Activated B cell treated with CpG ODN at 0.5 μM for 24 hours (primary cell): ENCODE measurements at regions of chr7 and their contacts with region 1.

Region 1: DNA sequence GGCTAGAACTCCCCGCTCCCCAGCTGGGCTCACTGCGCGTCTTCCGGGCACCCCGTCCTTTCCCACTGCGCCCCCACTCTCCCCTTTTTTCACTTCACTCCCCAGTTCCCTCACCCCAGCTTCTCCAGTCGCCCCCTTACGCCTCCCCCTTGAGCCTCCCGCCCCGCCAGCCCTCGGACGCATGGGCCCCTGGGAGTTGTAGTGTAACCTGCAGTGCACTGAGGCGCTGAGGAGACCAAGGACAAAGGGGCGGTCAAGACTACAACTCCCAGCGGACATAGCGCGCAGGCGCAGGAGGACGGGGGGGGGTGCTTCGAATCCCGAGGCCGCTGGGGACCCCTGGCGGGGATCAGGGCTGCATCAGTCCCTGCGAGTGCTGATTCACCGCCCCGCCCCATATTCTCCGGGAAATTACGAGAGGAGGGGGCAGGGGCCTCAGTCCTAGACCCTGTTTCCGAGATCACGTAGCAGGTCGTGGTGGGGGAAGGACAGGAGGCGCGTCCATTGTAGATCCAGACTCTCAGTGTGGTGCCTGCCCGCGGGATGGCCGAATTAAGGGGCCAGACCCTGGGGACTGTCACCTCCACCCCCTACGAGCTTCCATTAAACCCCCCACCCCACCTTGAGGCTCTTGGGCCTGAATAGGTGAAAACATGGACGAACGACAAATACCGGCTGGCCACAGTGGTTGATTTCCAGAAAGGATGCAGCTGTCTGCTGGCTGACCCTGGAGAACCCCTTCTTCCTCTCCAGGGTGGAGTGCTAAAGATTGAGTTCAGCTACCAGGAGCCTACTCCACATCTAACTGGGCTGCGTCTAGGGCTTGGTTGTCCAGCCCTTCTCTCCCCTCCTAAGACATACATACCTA is 554 bp upstream of the YWHAG start:
- DNase-seq: peak; percentile 90
- ATAC-seq: peak; percentile 90
- H3K4me3 Mint-ChIP-seq: peak overlapping the region; percentile 92
- H3K27ac Mint-ChIP-seq: peak overlapping the region; percentile 98
- H3K4me1 Mint-ChIP-seq: peaks cover 39% of the 10 kb centered on the region
- H3K27me3 Mint-ChIP-seq: no peaks in the 10 kb centered on the region
- CTCF ChIP-seq: no peak

Region 2: DNA sequence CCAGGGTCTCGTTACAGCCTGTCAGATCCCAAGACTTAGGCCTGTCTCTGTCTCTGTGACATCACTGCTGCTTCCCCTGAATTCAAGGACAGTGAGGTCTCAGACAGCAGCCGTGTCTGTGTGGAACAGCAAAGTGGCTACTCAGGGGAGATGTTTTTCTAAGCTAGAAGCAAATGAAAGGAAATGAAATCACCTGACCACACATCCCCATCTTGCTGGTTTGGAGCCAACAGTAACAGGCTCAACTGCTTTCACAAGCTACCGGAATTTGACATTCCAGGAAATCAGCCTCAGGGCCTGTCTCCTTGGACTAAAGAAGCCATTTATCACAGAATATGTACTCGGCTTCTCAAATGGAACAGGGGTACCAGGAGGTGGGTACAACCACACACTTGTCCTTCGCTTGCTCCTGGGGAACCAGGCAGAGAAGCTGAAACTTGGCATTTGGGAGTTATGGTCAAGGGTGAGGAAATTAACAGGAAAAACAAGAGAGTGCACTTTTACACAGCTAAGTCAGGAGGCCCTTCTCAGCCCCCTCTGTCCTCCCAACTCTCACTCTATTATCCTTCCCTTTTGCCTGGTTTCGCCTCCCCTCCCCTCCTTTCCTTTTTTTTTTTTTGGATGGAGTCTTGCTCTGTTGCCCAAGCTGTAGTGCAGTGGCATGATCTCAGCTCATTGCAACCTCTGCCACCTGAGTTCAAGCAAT is 794.1 kb before region 1 on chr7:
- CTCF ChIA-PET with region 1: no interaction called
- POLR2A ChIA-PET with region 1: no interaction called
- intact Hi-C with region 1: no loop called
- DNase-seq: no peak
- ATAC-seq: no peak
- H3K4me3 Mint-ChIP-seq: no peak overlapping the region
- H3K27ac Mint-ChIP-seq: no peak overlapping the region
- H3K4me1 Mint-ChIP-seq: peaks cover 4% of the 10 kb centered on the region
- H3K27me3 Mint-ChIP-seq: no peaks in the 10 kb centered on the region
- CTCF ChIP-seq: no peak

Region 3: GRCh38 chr7:75878769-75879611 is 480.4 kb before region 1 on chr7 and contains the start of gene RHBDD2:
- CTCF ChIA-PET with region 1: no interaction called
- POLR2A ChIA-PET with region 1: no interaction called
- intact Hi-C with region 1: loop called (anchors 1 kb)
- DNase-seq: peak; percentile 89
- ATAC-seq: peak; percentile 98
- H3K4me3 Mint-ChIP-seq: peak within 1 kb of the TSS; percentile 97
- H3K27ac Mint-ChIP-seq: peak within 1 kb of the TSS; percentile 94
- H3K4me1 Mint-ChIP-seq: peaks cover 26% of the 10 kb centered on the region
- H3K27me3 Mint-ChIP-seq: no peaks in the 10 kb centered on the region
- CTCF ChIP-seq: no peak
- total RNA-seq, gene RHBDD2: 28.4 and 32.8 TPM in 2 replicates

Region 4: GRCh38 chr7:76037310-76037709 is 322.0 kb before region 1 on chr7:
- CTCF ChIA-PET with region 1: no interaction called
- POLR2A ChIA-PET with region 1: no interaction called
- intact Hi-C with region 1: no loop called
- DNase-seq: no peak
- ATAC-seq: no peak
- H3K4me3 Mint-ChIP-seq: no peak overlapping the region
- H3K27ac Mint-ChIP-seq: no peak overlapping the region
- H3K4me1 Mint-ChIP-seq: no peaks in the 10 kb centered on the region
- H3K27me3 Mint-ChIP-seq: no peaks in the 10 kb centered on the region
- CTCF ChIP-seq: no peak

Region 5: DNA sequence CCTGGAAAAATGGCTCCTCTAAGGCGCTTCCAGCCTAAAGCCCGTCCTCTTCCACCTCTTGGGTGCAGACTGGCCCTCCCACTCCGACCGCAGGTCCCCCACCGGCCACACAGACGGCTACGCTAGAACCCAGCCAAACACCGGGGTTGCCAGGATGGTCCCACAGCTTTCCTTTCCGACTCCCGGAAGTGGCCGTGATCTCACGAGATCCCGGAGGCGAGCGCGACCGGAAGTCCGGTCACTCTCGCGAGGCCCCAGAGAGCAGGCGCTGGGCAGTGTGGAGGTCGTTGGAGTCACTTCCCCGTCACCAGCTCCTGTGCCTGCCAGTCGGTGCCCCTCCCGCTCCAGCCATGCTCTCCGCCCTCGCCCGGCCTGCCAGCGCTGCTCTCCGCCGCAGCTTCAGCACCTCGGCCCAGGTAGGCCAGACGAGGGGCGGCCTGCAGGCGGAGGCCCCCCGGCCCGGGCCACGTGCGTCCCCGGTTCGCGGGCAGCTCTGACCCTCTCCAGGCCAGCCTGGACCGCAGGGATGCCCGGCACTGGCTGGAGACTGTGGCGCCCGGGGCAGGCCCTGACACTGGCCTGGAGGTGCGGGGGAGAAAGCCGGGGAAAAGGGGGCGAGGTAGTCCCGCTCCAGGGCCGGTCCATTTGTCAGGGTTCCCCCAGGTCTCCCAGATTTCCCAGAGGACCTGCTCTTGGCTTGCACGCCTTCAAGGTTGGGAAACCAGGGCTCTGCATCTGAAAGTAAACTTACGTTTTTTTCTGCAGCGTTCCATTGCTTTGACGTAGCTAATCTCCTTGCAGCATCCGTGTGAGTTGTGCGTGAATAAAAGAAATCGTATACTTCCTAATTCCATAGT is 311.3 kb before region 1 on chr7 and contains the starts of genes MDH2 and STYXL1:
- CTCF ChIA-PET with region 1: no interaction called
- POLR2A ChIA-PET with region 1: interaction called, 9 read pairs
- intact Hi-C with region 1: loop called (anchors 2 kb)
- DNase-seq: peak; percentile 82
- ATAC-seq: peak; percentile 89
- H3K4me3 Mint-ChIP-seq: peak within 1 kb of the TSS; percentile 98
- H3K27ac Mint-ChIP-seq: peak within 1 kb of the TSS; percentile 95
- H3K4me1 Mint-ChIP-seq: peaks cover 40% of the 10 kb centered on the region
- H3K27me3 Mint-ChIP-seq: no peaks in the 10 kb centered on the region
- CTCF ChIP-seq: no peak
- total RNA-seq, gene MDH2: 120 and 125 TPM in 2 replicates
- total RNA-seq, gene STYXL1: 23.1 and 28.1 TPM in 2 replicates

Region 6: GRCh38 chr7:76234931-76235441 is 124.4 kb before region 1 on chr7:
- CTCF ChIA-PET with region 1: no interaction called
- POLR2A ChIA-PET with region 1: no interaction called
- intact Hi-C with region 1: no loop called
- DNase-seq: peak; percentile 48
- ATAC-seq: peak; percentile 87
- H3K4me3 Mint-ChIP-seq: peak overlapping the region; percentile 53
- H3K27ac Mint-ChIP-seq: no peak overlapping the region
- H3K4me1 Mint-ChIP-seq: peaks cover 8% of the 10 kb centered on the region
- H3K27me3 Mint-ChIP-seq: peaks cover 55% of the 10 kb centered on the region
- CTCF ChIP-seq: no peak

Region 7: DNA sequence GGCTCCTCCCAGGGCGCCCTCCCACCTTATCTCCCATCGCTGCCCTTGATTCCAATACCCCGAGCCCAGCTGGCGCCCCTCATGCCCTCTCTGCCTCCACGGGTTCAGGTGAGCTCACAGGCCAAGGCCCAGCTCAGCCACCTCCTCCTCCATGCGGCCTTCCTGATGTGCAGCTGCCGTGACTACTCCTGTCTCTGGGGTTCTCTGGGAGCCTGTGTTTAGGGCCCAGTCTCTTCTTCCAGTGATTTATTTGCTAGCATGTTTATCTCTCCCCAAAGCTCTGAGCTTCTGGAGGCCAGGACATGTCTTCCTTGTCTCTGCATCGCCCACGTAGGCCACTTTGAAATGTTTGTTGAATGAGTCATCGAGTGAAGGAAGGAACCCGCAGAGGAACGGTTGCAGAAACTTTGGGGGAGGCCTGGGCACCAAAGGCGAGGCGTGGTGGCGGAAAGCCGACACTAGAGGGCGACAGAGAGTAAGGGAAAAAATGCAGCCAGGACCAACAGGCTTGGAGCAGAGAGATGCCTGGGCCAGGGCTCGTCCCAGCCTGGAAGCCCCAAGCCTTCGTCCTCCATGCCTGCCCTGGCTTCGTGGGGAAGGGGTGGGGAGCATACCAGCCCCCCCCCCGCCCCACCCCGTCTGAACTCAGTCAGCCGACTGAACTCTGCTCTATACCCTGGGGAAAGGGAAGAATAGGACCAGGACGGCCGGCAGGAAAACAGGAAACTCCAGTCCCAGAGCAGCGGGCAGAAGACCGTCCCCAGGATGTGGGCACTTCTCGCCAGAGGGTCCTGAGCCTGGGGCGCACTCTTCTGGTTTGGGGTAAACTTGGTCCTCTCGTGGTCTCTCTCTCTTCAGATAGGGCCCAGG is 67.8 kb before region 1 on chr7:
- CTCF ChIA-PET with region 1: interaction called, 4 read pairs
- POLR2A ChIA-PET with region 1: interaction called, 16 read pairs
- intact Hi-C with region 1: loop called (anchors 1 kb)
- DNase-seq: peak; percentile 74
- ATAC-seq: peak; percentile 81
- H3K4me3 Mint-ChIP-seq: no peak overlapping the region
- H3K27ac Mint-ChIP-seq: no peak overlapping the region
- H3K4me1 Mint-ChIP-seq: peaks cover 7% of the 10 kb centered on the region
- H3K27me3 Mint-ChIP-seq: peaks cover 9% of the 10 kb centered on the region
- CTCF ChIP-seq: peak; percentile 55

Region 8: GRCh38 chr7:76314042-76314721 is 45.2 kb before region 1 on chr7:
- CTCF ChIA-PET with region 1: interaction called, 8 read pairs
- POLR2A ChIA-PET with region 1: interaction called, 37 read pairs
- intact Hi-C with region 1: loop called (anchors 1 kb)
- DNase-seq: peak; percentile 88
- ATAC-seq: peak; percentile 59
- H3K4me3 Mint-ChIP-seq: no peak overlapping the region
- H3K27ac Mint-ChIP-seq: no peak overlapping the region
- H3K4me1 Mint-ChIP-seq: peaks cover 20% of the 10 kb centered on the region
- H3K27me3 Mint-ChIP-seq: no peaks in the 10 kb centered on the region
- CTCF ChIP-seq: peak; percentile 70

Region 9: DNA sequence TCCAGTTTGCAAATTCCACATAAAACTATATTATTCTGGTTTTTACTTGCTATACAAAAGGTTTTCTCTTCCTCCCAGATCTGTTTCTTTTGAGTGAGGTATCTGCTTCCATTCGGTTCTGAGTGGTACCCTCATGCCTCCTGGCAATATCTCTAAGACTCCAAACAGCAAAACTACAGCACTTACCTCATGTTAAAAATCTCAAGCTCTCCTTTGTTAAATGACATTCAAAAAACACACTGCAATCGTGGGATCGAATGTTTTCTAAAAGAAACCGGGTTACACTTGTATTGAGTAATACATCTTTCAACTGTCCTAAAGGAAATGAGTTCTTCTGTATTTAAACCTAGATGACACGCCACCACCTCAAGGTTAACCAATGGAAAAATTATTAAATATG is 11.6 kb before region 1 on chr7:
- CTCF ChIA-PET with region 1: no interaction called
- POLR2A ChIA-PET with region 1: no interaction called
- intact Hi-C with region 1: no loop called
- DNase-seq: no peak
- ATAC-seq: no peak
- H3K4me3 Mint-ChIP-seq: no peak overlapping the region
- H3K27ac Mint-ChIP-seq: no peak overlapping the region
- H3K4me1 Mint-ChIP-seq: peaks cover 31% of the 10 kb centered on the region
- H3K27me3 Mint-ChIP-seq: no peaks in the 10 kb centered on the region
- CTCF ChIP-seq: no peak